ENCODE measurements at regions of chr2 and their contacts with region 1.

Region 1: DNA sequence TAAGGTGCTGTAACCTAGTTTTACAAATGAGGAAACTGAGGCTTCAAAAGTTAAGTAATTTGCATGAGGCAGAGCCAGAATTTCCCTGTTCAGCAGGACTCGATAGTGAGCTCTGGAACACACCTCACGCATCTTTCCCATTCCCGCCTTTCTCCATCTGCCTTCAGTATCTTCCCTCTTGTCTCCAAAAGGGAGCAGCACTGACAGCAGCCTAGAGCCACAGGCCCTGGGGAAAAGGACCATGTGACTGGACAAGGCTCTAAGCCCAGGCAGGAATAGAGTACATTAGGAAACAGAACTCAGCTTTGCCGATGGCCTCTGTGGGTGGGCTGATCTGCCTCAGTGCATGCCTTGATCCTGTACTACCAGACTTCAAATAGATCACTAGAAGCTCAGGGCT is 21.5 kb downstream of the GPR155 start:
- DNase-seq: no peak
- H3K4me3 ChIP-seq: no peak overlapping the region
- H3K27ac ChIP-seq: no peak overlapping the region
- H3K4me1 ChIP-seq: no peaks in the 10 kb centered on the region
- H3K27me3 ChIP-seq: no peaks in the 10 kb centered on the region
- CTCF ChIP-seq: no peak

Region 2: DNA sequence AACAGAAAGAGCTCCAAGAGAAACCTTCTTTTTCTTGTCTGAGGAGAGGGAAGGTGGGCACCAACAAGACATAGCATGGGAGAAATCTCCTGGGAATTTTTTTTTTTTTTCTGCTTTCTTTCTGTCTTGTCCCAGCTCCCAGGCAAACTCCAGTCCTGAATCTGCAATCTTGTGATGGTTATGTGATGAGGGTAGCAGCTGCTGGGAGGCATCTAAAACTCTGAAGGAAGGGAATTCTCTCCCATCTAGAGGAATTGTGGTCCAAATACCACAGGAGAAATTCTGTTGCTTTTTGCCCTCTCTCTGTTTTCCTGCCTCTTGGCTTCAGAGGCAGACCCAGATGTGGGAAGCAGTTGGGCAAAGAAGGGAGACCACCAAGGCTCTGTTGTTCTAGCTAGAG is 53.1 kb before region 1 on chr2:
- CTCF ChIA-PET with region 1: interaction called, 3 read pairs
- POLR2A ChIA-PET with region 1: interaction called, 20 read pairs
- intact Hi-C with region 1: no loop called
- DNase-seq: no peak
- H3K4me3 ChIP-seq: no peak overlapping the region
- H3K27ac ChIP-seq: no peak overlapping the region
- H3K4me1 ChIP-seq: no peaks in the 10 kb centered on the region
- H3K27me3 ChIP-seq: no peaks in the 10 kb centered on the region
- CTCF ChIP-seq: no peak

Region 3: GRCh38 chr2:174442546-174443510 is 22.5 kb before region 1 on chr2:
- CTCF ChIA-PET with region 1: interaction called, 4 read pairs
- POLR2A ChIA-PET with region 1: interaction called, 22 read pairs
- intact Hi-C with region 1: no loop called
- DNase-seq: peak; percentile 71 to 79
- H3K4me3 ChIP-seq: no peak overlapping the region
- H3K27ac ChIP-seq: no peak overlapping the region; the same call in 1 of the 2 replicates
- H3K4me1 ChIP-seq: peaks cover 19% of the 10 kb centered on the region
- H3K27me3 ChIP-seq: no peaks in the 10 kb centered on the region
- CTCF ChIP-seq: no peak

Region 4: GRCh38 chr2:174522553-174522952 is 57.2 kb after region 1 on chr2:
- CTCF ChIA-PET with region 1: interaction called, 3 read pairs
- POLR2A ChIA-PET with region 1: no interaction called
- intact Hi-C with region 1: loop called (anchors 1 kb)
- DNase-seq: no peak
- H3K4me3 ChIP-seq: no peak overlapping the region
- H3K27ac ChIP-seq: no peak overlapping the region
- H3K4me1 ChIP-seq: no peaks in the 10 kb centered on the region
- H3K27me3 ChIP-seq: peaks cover 73% of the 10 kb centered on the region
- CTCF ChIP-seq: peak; percentile 59; the same call in 1 of the 2 replicates

Region 5: DNA sequence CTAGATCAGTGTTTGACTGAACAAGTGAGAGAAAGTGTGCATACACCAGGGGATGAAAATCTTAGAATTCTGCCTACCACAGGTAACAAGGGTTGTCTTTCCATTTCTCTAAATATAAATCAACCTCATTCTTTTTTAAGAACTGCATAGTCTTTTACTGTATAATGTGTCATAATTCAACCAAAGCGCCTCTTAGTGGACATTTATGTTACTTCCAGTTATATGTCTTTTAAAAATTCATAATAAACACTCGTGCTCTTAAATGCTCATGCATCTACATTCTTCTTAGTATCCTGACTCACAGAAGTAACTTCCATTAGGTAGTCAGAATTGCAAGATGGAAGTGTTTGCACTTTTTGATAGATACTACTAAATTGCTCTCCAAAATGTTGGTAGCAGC is 222.8 kb after region 1 on chr2:
- CTCF ChIA-PET with region 1: no interaction called
- POLR2A ChIA-PET with region 1: no interaction called
- intact Hi-C with region 1: loop called (anchors 1 kb)
- DNase-seq: no peak
- H3K4me3 ChIP-seq: no peak overlapping the region
- H3K27ac ChIP-seq: no peak overlapping the region
- H3K4me1 ChIP-seq: no peaks in the 10 kb centered on the region
- H3K27me3 ChIP-seq: no peaks in the 10 kb centered on the region
- CTCF ChIP-seq: peak; percentile 68

Region 6: DNA sequence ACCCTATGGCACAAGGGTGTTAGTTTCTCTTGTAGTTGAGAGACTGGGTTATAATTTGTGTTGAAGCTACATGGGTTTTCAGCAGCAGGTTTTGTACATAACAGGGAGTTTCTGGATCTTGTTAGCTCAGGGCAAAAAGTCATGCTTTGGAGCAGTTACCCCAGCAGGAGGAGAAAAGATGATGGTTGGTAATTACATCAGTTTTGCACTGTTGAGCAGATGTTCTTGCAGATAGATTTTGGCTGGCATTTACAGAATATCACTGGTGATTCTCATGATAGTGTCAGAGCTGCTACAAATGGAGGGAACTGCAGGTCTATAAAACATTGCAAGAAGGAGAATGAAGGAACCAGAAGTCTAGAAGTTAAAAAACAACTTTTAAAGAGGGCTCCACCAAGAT is 931.4 kb after region 1 on chr2:
- CTCF ChIA-PET with region 1: no interaction called
- POLR2A ChIA-PET with region 1: no interaction called
- intact Hi-C with region 1: no loop called
- DNase-seq: no peak
- H3K4me3 ChIP-seq: no peak overlapping the region
- H3K27ac ChIP-seq: no peak overlapping the region
- H3K4me1 ChIP-seq: peaks cover 8% of the 10 kb centered on the region; the same call in 1 of the 2 replicates
- H3K27me3 ChIP-seq: peaks cover 12% of the 10 kb centered on the region
- CTCF ChIP-seq: no peak